Stomach (tissue), 19 donors: ENCODE measurements at regions of chr2 and their contacts with region 1.

Region 1: GRCh38 chr2:217166241-217166850 is 306.5 kb upstream of the TNP1 start:
- DNase-seq: peak in 1 of 2 donors; percentile 62
- H3K4me3 ChIP-seq: no peak overlapping the region
- H3K27ac ChIP-seq: no peak overlapping the region
- H3K4me1 ChIP-seq: peaks cover 0 to 13% (median 4%) of the 10 kb centered on the region in 4 donors
- H3K27me3 ChIP-seq: no peaks in the 10 kb centered on the region
- CTCF ChIP-seq: peak in 4 of 7 experiments; percentile 29 to 42 (median 34)
- EP300 ChIP-seq: no peak
- POLR2A ChIP-seq: no peak

Region 2: GRCh38 chr2:216698895-216699294 is 467.5 kb before region 1 on chr2:
- intact Hi-C with region 1: loop called (anchors 5 kb)
- DNase-seq: peak in 1 of 2 donors; percentile 89
- H3K4me3 ChIP-seq: no peak overlapping the region
- H3K27ac ChIP-seq: peak overlapping the region in 4 of 5 donors; percentile 50 to 90 (median 74)
- H3K4me1 ChIP-seq: peaks cover 19 to 83% (median 47%) of the 10 kb centered on the region in 4 donors
- H3K27me3 ChIP-seq: peaks cover 0 to 48% (median 21%) of the 10 kb centered on the region in 3 donors
- CTCF ChIP-seq: peak in 5 of 7 experiments; percentile 35 to 80 (median 54)
- EP300 ChIP-seq: no peak
- POLR2A ChIP-seq: no peak